Colonic mucosa (tissue), 4 donors: ENCODE measurements at regions of chr22 and their contacts with region 1.

Region 1: DNA sequence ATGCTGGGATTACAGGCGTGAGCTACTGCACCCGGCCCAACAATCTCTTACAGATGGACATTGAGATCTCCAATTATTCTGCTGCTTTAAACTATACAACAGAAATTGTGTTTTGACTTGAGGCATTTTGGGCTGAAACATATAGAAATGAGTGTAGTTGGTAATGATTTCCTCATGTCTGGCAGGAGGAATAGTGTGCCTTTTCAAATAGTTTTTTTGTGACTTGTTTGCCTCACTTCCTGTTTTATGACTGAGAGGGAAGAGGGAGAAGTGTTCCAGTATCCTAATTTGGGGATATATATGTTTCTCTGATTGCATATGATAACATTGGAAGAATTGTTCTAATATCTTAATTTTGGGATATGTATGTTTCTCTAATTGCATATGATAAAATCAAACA is 40.2 kb downstream of the EP300 start:
- DNase-seq: no peak
- H3K4me3 ChIP-seq: no peak overlapping the region
- H3K27ac ChIP-seq: no peak overlapping the region
- H3K4me1 ChIP-seq: no peaks in the 10 kb centered on the region
- H3K27me3 ChIP-seq: no peaks in the 10 kb centered on the region
- CTCF ChIP-seq: no peak

Region 2: DNA sequence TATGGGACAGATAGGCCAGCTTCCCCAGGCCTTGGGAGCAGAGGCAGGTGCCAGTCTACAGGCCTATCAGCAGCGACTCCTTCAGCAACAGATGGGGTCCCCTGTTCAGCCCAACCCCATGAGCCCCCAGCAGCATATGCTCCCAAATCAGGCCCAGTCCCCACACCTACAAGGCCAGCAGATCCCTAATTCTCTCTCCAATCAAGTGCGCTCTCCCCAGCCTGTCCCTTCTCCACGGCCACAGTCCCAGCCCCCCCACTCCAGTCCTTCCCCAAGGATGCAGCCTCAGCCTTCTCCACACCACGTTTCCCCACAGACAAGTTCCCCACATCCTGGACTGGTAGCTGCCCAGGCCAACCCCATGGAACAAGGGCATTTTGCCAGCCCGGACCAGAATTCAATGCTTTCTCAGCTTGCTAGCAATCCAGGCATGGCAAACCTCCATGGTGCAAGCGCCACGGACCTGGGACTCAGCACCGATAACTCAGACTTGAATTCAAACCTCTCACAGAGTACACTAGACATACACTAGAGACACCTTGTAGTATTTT is 46.0 kb after region 1 on chr22:
- intact Hi-C with region 1: loop called (anchors 5 kb)
- DNase-seq: no peak
- H3K4me3 ChIP-seq: no peak overlapping the region
- H3K27ac ChIP-seq: no peak overlapping the region
- H3K4me1 ChIP-seq: no peaks in the 10 kb centered on the region
- H3K27me3 ChIP-seq: no peaks in the 10 kb centered on the region
- CTCF ChIP-seq: no peak